ENCODE measurements at regions of chr1 and their contacts with region 1.

Region 1: DNA sequence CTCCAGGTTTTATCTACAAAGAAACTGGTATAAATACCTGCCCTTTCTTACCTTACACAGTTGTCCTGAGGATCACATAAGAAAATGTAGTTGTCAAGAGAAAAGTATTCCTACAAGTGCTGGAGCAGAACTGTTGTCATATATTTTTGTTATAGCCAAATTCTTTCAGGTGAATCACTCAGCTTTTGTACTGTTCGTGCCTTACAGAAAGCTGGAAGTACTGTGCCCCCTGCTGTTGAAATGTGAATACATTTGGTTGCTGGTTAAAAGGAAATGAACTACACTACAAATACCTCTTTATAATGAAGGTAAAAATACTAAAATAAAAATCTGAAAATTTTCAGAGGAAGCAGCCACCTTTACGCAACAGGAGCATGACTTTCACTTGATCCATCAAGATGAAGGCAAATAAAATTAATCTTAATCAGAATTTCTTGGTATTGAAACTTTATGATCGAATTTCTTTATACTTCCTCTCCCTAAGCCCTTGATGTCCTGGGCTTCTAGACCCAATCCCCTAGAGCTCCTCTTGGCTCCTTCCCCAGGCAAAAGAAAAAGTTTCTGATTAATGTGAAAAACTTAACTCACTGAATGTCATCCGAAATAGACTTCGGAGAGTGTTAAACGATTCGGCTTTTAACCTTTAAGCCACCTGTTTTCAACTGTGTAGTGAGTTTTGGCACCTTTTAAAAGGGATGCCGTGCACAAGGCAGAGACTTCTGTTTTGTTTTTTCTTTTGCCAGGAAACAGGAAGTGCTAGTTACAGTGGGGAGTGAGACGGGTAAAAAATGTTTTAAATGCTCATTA is 12.5 kb downstream of the CHML start:
- DNase-seq: peak; percentile 46
- H3K4me3 ChIP-seq: no peak overlapping the region
- CTCF ChIP-seq: peak; percentile 56

Region 2: GRCh38 chr1:241531195-241532161 is 96.2 kb before region 1 on chr1:
- CTCF ChIA-PET with region 1: interaction called, 17 read pairs
- POLR2A ChIA-PET with region 1: no interaction called
- DNase-seq: peak; percentile 47
- H3K4me3 ChIP-seq: peak overlapping the region; percentile 44
- CTCF ChIP-seq: peak; percentile 26

Region 3: DNA sequence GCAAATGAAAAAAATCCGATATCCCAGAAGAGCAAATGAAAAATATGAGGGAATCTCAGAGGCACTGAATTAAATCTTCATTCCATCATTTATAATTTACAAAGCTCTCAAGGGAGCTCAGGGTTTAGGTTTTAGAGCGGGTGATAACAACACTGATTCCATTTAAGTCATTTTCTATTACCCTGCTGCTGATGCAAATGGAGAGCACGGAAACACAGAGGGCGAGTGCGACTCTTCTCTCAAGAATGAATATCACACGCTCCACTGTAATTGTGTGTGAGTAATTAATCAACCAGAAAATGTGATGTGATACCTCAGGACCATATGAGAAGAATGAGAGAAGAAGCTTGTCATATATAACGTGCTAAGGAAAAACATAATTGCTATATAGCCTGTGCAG is 10.2 kb before region 1 on chr1:
- CTCF ChIA-PET with region 1: interaction called, 84 read pairs
- POLR2A ChIA-PET with region 1: no interaction called
- DNase-seq: no peak
- H3K4me3 ChIP-seq: no peak overlapping the region
- CTCF ChIP-seq: no peak

Region 4: GRCh38 chr1:241834733-241835377 is 207.2 kb after region 1 on chr1:
- CTCF ChIA-PET with region 1: interaction called, 17 read pairs
- POLR2A ChIA-PET with region 1: no interaction called
- DNase-seq: no peak
- H3K4me3 ChIP-seq: no peak overlapping the region
- CTCF ChIP-seq: peak; percentile 64

Region 5: GRCh38 chr1:241842565-241842964 is 214.9 kb after region 1 on chr1:
- CTCF ChIA-PET with region 1: interaction called, 11 read pairs
- POLR2A ChIA-PET with region 1: no interaction called
- DNase-seq: no peak
- H3K4me3 ChIP-seq: no peak overlapping the region
- CTCF ChIP-seq: no peak

Region 6: GRCh38 chr1:242128951-242129502 is 501.4 kb after region 1 on chr1:
- CTCF ChIA-PET with region 1: no interaction called
- POLR2A ChIA-PET with region 1: no interaction called
- DNase-seq: no peak
- H3K4me3 ChIP-seq: no peak overlapping the region
- CTCF ChIP-seq: no peak

Measured in AG04449 (cell line).